MCF 10A (cell line): ENCODE measurements at regions of chr1 and their contacts with region 1.

Region 1: GRCh38 chr1:176559878-176560277 is 96.9 kb downstream of the PAPPA2 start:
- DNase-seq: peak; percentile 83
- H3K4me3 Mint-ChIP-seq: no peak overlapping the region
- H3K27ac Mint-ChIP-seq: no peak overlapping the region
- H3K4me1 Mint-ChIP-seq: no peaks in the 10 kb centered on the region
- H3K27me3 Mint-ChIP-seq: peaks cover 31% of the 10 kb centered on the region
- CTCF ChIP-seq: peak; percentile 99

Region 2: GRCh38 chr1:175839678-175840669 is 719.9 kb before region 1 on chr1:
- CTCF ChIA-PET with region 1: no interaction called
- POLR2A ChIA-PET with region 1: no interaction called
- intact Hi-C with region 1: no loop called
- DNase-seq: peak; percentile 67
- H3K4me3 Mint-ChIP-seq: peak overlapping the region; percentile 15
- H3K27ac Mint-ChIP-seq: no peak overlapping the region
- H3K4me1 Mint-ChIP-seq: peaks cover 19% of the 10 kb centered on the region
- H3K27me3 Mint-ChIP-seq: peaks cover 40% of the 10 kb centered on the region
- CTCF ChIP-seq: no peak

Region 3: GRCh38 chr1:176517484-176517883 is 42.4 kb before region 1 on chr1:
- CTCF ChIA-PET with region 1: interaction called, 21 read pairs
- POLR2A ChIA-PET with region 1: no interaction called
- intact Hi-C with region 1: no loop called
- DNase-seq: peak; percentile 93
- H3K4me3 Mint-ChIP-seq: no peak overlapping the region
- H3K27ac Mint-ChIP-seq: peak overlapping the region; percentile 69
- H3K4me1 Mint-ChIP-seq: peaks cover 23% of the 10 kb centered on the region
- H3K27me3 Mint-ChIP-seq: peaks cover 32% of the 10 kb centered on the region
- CTCF ChIP-seq: no peak

Region 4: GRCh38 chr1:176577646-176578197 is 17.8 kb after region 1 on chr1:
- CTCF ChIA-PET with region 1: interaction called, 75 read pairs
- POLR2A ChIA-PET with region 1: no interaction called
- intact Hi-C with region 1: no loop called
- DNase-seq: no peak
- H3K4me3 Mint-ChIP-seq: no peak overlapping the region
- H3K27ac Mint-ChIP-seq: no peak overlapping the region
- H3K4me1 Mint-ChIP-seq: no peaks in the 10 kb centered on the region
- H3K27me3 Mint-ChIP-seq: no peaks in the 10 kb centered on the region
- CTCF ChIP-seq: no peak

Region 5: GRCh38 chr1:176682830-176683535 is 123.1 kb after region 1 on chr1:
- CTCF ChIA-PET with region 1: interaction called, 252 read pairs
- POLR2A ChIA-PET with region 1: no interaction called
- intact Hi-C with region 1: no loop called
- DNase-seq: no peak
- H3K4me3 Mint-ChIP-seq: no peak overlapping the region
- H3K27ac Mint-ChIP-seq: no peak overlapping the region
- H3K4me1 Mint-ChIP-seq: no peaks in the 10 kb centered on the region
- H3K27me3 Mint-ChIP-seq: peaks cover 12% of the 10 kb centered on the region
- CTCF ChIP-seq: no peak

Region 6: GRCh38 chr1:176717066-176717750 is 157.3 kb after region 1 on chr1:
- CTCF ChIA-PET with region 1: interaction called, 10 read pairs
- POLR2A ChIA-PET with region 1: no interaction called
- intact Hi-C with region 1: no loop called
- DNase-seq: no peak
- H3K4me3 Mint-ChIP-seq: no peak overlapping the region
- H3K27ac Mint-ChIP-seq: no peak overlapping the region
- H3K4me1 Mint-ChIP-seq: no peaks in the 10 kb centered on the region
- H3K27me3 Mint-ChIP-seq: no peaks in the 10 kb centered on the region
- CTCF ChIP-seq: no peak

Region 7: DNA sequence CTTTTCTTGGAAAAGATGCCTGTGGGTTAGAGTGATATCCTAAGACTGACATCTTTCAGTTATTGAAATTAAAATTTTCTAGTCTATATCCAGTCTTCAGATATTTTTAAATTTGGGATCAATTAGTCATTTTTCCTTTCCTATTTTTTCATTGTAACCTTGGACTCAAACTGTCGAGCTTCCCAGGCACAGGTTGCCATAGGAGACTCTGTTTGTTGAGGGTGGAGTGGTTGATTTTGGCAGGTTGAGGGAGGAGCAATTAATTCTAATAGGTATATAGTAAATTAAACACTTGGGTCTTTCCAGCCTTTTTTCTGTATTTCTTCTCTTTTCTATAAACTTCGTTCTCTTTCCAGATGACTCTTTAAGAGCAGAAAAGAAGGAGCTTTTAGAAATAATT is 277.8 kb after region 1 on chr1:
- CTCF ChIA-PET with region 1: interaction called, 140 read pairs
- POLR2A ChIA-PET with region 1: no interaction called
- intact Hi-C with region 1: no loop called
- DNase-seq: no peak
- H3K4me3 Mint-ChIP-seq: no peak overlapping the region
- H3K27ac Mint-ChIP-seq: no peak overlapping the region
- H3K4me1 Mint-ChIP-seq: no peaks in the 10 kb centered on the region
- H3K27me3 Mint-ChIP-seq: no peaks in the 10 kb centered on the region
- CTCF ChIP-seq: no peak

Region 8: DNA sequence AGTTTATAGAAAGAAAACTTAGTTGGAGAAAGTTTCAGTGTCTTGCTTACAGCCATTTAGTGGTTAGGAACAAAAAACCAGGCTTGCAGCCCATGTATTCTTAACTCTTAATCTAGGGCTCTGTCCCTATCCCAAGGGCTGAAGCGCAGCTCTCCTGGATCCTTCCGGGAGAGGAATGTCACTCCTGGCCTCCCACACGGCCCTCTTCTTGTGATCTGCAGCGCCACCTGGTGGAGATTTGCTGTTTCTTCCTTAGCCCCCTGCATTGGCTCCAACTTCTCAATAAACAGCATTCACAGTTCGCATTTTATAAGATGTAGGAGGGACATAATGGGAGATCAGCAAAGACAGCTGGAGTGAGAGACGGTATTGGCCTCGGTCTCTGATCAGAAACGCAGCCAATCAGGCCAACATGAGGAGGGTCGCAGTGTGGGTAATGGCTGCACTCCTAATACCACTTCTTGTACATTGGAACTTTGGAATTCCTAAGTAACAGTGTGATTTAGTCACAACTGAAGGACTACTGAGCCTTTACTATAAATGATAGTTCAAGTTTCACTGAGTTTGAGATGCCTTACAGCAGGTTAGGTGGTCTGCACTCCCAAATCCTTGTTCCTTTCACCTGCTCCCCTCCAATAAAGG is 321.2 kb after region 1 on chr1:
- CTCF ChIA-PET with region 1: interaction called, 152 read pairs
- POLR2A ChIA-PET with region 1: no interaction called
- intact Hi-C with region 1: loop called (anchors 1 kb)
- DNase-seq: peak; percentile 90
- H3K4me3 Mint-ChIP-seq: no peak overlapping the region
- H3K27ac Mint-ChIP-seq: no peak overlapping the region
- H3K4me1 Mint-ChIP-seq: no peaks in the 10 kb centered on the region
- H3K27me3 Mint-ChIP-seq: peaks cover 12% of the 10 kb centered on the region
- CTCF ChIP-seq: peak; percentile 95

Region 9: GRCh38 chr1:177077734-177078489 is 518.0 kb after region 1 on chr1:
- CTCF ChIA-PET with region 1: no interaction called
- POLR2A ChIA-PET with region 1: no interaction called
- intact Hi-C with region 1: no loop called
- DNase-seq: no peak
- H3K4me3 Mint-ChIP-seq: no peak overlapping the region
- H3K27ac Mint-ChIP-seq: no peak overlapping the region
- H3K4me1 Mint-ChIP-seq: no peaks in the 10 kb centered on the region
- H3K27me3 Mint-ChIP-seq: no peaks in the 10 kb centered on the region
- CTCF ChIP-seq: no peak